ENCODE measurements at regions of chr6 and their contacts with region 1.

Region 1: GRCh38 chr6:1396952-1397868 is 7.8 kb downstream of the FOXF2 start:
- DNase-seq: peak; percentile 75
- H3K4me3 Mint-ChIP-seq: no peak overlapping the region
- H3K27ac Mint-ChIP-seq: peak overlapping the region; percentile 69
- H3K4me1 Mint-ChIP-seq: peaks cover 9% of the 10 kb centered on the region
- H3K27me3 Mint-ChIP-seq: no peaks in the 10 kb centered on the region
- CTCF ChIP-seq: peak; percentile 89

Region 2: GRCh38 chr6:722077-722524 is 675.1 kb before region 1 on chr6:
- CTCF ChIA-PET with region 1: interaction called, 12 read pairs
- POLR2A ChIA-PET with region 1: interaction called, 5 read pairs
- intact Hi-C with region 1: no loop called
- DNase-seq: peak; percentile 87
- H3K4me3 Mint-ChIP-seq: no peak overlapping the region
- H3K27ac Mint-ChIP-seq: no peak overlapping the region
- H3K4me1 Mint-ChIP-seq: no peaks in the 10 kb centered on the region
- H3K27me3 Mint-ChIP-seq: peaks cover 12% of the 10 kb centered on the region
- CTCF ChIP-seq: peak; percentile 74

Region 3: GRCh38 chr6:912871-913835 is 484.1 kb before region 1 on chr6:
- CTCF ChIA-PET with region 1: interaction called, 3 read pairs
- POLR2A ChIA-PET with region 1: no interaction called
- intact Hi-C with region 1: loop called (anchors 1 kb)
- DNase-seq: peak; percentile 48
- H3K4me3 Mint-ChIP-seq: no peak overlapping the region
- H3K27ac Mint-ChIP-seq: no peak overlapping the region
- H3K4me1 Mint-ChIP-seq: no peaks in the 10 kb centered on the region
- H3K27me3 Mint-ChIP-seq: peaks cover 12% of the 10 kb centered on the region
- CTCF ChIP-seq: peak; percentile 77

Region 4: GRCh38 chr6:1424306-1424928 is 27.2 kb after region 1 on chr6:
- CTCF ChIA-PET with region 1: interaction called, 12 read pairs
- POLR2A ChIA-PET with region 1: no interaction called
- intact Hi-C with region 1: no loop called
- DNase-seq: peak; percentile 78
- H3K4me3 Mint-ChIP-seq: no peak overlapping the region
- H3K27ac Mint-ChIP-seq: no peak overlapping the region
- H3K4me1 Mint-ChIP-seq: peaks cover 6% of the 10 kb centered on the region
- H3K27me3 Mint-ChIP-seq: peaks cover 26% of the 10 kb centered on the region
- CTCF ChIP-seq: peak; percentile 69

Measured in MCF 10A (cell line).